ENCODE measurements at regions of chr19 and their contacts with region 1.

Region 1: DNA sequence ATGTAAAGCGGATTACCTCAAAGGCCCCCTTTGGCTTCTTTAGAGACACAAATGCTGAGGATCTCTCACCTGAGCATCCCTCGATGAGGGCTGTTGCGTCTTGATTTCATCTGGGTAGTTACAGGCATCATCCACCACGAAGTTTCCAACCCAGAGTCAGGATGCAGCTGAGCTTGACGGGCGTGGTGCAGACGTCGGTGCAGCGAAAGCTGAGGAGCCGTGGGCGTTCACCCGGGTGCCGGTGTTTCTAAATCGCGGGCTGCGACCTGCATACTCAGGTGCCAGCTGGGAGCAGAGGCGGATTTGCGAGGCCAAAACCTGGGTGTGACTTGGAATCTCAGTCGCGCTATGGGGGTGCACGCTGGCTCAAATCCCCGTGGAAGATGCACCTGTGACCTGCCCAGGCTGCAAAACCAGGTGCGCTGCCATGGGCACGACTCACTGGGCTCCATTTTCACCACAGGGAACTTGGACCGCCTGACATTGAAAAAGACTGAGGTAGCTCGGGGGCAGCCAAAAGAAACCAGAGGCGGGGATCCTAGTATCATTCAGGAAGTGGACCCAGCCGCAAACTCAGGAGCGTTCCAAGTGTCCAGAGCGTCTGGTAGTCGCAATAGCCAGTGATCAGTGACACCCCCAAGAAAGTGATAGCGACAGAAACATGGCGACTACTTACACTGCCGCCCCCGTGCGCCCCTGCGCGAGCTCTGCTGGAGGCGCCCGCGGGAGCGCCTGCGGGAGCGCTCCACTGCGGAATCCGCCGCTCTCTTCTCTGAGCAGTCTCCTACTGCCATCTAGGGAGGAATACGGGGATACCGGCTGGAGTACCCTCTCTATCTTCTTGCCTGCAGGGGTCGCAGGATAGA is 36.4 kb upstream of the IGFL4 start:
- DNase-seq: no peak
- H3K4me3 ChIP-seq: peak overlapping the region in 3 of 4 donors; percentile 34 to 55 (median 39)
- H3K27ac ChIP-seq: peak overlapping the region in 1 of 4 donors; percentile 18
- H3K4me1 ChIP-seq: peaks cover 6 to 16% (median 7%) of the 10 kb centered on the region in 3 donors
- H3K27me3 ChIP-seq: peaks cover 0 to 95% (median 10%) of the 10 kb centered on the region in 4 donors
- CTCF ChIP-seq: peak; percentile 61 to 95 (median 82)
- POLR2A ChIP-seq: no peak

Region 2: GRCh38 chr19:46030812-46031550 is 46.2 kb before region 1 on chr19:
- intact Hi-C with region 1: loop called (anchors 5 kb)
- DNase-seq: no peak
- H3K4me3 ChIP-seq: no peak overlapping the region
- H3K27ac ChIP-seq: no peak overlapping the region
- H3K4me1 ChIP-seq: peaks cover 0 to 4% (median 0%) of the 10 kb centered on the region in 3 donors
- H3K27me3 ChIP-seq: peaks cover 0 to 49% (median 0%) of the 10 kb centered on the region in 4 donors
- CTCF ChIP-seq: no peak
- POLR2A ChIP-seq: no peak

Region 3: DNA sequence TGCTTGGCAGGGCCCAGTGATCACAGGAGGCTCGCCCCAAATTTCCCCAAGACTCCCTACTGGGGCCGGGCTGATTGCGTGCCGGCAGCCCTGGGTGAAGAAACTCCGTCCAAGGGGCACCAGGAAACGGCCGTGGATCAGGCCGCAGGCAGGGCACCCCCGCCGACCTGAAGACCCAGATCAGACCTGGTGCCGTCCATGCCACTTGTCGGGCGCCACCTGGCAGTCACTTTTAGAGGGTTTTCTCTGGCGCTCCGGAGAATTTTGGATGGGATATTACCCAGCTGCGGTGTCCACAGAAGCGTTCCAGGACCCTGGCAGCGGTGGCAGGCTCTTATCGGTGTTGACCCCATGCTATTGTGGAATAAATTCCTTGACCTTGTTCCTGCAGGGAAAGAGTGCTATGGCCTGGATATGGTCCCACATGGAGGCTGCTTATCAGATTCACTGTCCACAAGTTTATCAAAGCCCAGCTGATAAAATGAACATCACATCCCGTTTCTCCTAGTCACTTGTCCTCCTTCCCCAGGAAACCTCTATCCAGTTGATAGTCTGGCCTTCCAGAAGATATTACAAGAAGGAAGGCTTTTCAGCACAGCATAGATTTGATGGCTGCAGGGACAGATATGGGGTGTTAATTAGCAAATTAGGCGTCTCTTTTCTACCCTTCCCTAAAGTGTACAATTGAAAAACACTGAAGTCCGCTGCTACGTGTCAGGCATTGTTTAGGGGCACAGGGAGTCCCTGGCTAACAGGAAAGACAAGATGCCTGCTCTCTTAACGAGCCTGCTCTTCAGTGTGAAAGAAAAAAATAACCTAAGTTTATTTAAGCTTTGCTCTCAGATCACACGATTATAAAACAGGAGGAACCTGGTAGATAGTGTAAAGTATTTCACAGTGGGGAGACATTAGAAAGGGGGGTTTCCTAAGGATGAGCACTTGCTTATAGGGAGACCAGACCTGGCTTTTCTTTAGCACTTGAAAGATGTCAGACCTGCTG is 109.2 kb after region 1 on chr19:
- intact Hi-C with region 1: loop called (anchors 5 kb)
- DNase-seq: no peak
- H3K4me3 ChIP-seq: no peak overlapping the region
- H3K27ac ChIP-seq: no peak overlapping the region
- H3K4me1 ChIP-seq: peaks cover 0 to 1% (median 0%) of the 10 kb centered on the region in 3 donors
- H3K27me3 ChIP-seq: peaks cover 0 to 34% (median 0%) of the 10 kb centered on the region in 4 donors
- CTCF ChIP-seq: no peak
- POLR2A ChIP-seq: no peak

Measured in esophagus squamous epithelium (tissue), 5 donors.